ENCODE measurements at regions of chr1 and their contacts with region 1.

Region 1: DNA sequence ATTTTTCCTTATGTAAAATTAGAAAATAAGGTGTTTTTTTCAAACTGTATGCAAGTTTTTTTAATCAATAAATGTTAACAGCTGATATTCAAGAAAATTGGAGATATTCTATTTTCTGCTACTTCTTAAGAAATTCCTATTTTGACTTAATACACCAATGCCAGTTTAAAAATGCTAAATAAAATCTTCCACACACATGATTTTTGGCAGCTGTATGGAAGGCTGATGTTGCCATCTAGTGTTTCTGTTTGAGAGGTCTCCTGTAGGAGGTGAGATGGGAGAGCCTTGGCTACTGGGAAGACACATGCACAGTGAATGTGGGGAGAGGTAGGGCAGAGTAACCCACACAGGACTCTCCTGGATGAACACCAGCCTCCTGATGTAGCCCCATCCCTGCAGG is 29.2 kb upstream of the OR2B11 start:
- DNase-seq: peak in 1 of 2 donors; percentile 76
- ATAC-seq: peak; percentile 54 to 68 (median 64)
- H3K4me3 ChIP-seq: no peak overlapping the region
- H3K4me3 Mint-ChIP-seq: no peak overlapping the region
- H3K27ac ChIP-seq: no peak overlapping the region
- H3K27ac Mint-ChIP-seq: no peak overlapping the region
- H3K4me1 ChIP-seq: no peaks in the 10 kb centered on the region
- H3K4me1 Mint-ChIP-seq: peaks cover 0 to 7% of the 10 kb centered on the region in 2 donors
- H3K27me3 ChIP-seq: no peaks in the 10 kb centered on the region
- H3K27me3 Mint-ChIP-seq: peaks cover 19 to 20% of the 10 kb centered on the region in 2 donors
- CTCF ChIP-seq: peak; percentile 55

Region 2: DNA sequence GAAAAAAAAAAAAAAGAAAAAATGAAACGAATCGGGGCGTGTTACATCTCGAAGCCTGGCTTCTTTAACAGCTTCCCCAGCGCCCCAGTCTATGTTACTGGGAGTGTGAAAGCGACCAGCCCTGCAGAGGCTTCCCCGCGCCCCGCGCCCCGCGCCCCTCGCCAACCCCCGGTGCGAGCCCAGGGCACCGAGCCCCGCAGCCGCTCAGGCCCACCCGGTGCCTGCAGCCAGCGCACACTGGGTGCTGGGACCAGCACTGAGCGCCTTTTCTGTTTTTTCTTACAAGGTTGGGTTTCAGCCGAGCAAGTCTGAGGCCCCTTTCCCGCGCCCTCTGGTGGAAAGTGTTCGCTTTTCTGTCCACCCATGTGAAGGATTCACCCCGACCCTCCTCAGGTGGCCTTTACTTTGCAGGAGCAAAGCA is 113.3 kb before region 1 on chr1:
- intact Hi-C with region 1: loop called (anchors 1 kb)
- DNase-seq: peak; percentile 35 to 76
- ATAC-seq: peak; percentile 75 to 84 (median 79)
- H3K4me3 ChIP-seq: no peak overlapping the region
- H3K4me3 Mint-ChIP-seq: peak overlapping the region; percentile 52
- H3K27ac ChIP-seq: no peak overlapping the region
- H3K27ac Mint-ChIP-seq: no peak overlapping the region
- H3K4me1 ChIP-seq: peaks cover 4% of the 10 kb centered on the region
- H3K4me1 Mint-ChIP-seq: peaks cover 0 to 4% of the 10 kb centered on the region in 2 donors
- H3K27me3 ChIP-seq: no peaks in the 10 kb centered on the region
- H3K27me3 Mint-ChIP-seq: peaks cover 0 to 7% of the 10 kb centered on the region in 2 donors
- CTCF ChIP-seq: peak; percentile 50

Region 3: DNA sequence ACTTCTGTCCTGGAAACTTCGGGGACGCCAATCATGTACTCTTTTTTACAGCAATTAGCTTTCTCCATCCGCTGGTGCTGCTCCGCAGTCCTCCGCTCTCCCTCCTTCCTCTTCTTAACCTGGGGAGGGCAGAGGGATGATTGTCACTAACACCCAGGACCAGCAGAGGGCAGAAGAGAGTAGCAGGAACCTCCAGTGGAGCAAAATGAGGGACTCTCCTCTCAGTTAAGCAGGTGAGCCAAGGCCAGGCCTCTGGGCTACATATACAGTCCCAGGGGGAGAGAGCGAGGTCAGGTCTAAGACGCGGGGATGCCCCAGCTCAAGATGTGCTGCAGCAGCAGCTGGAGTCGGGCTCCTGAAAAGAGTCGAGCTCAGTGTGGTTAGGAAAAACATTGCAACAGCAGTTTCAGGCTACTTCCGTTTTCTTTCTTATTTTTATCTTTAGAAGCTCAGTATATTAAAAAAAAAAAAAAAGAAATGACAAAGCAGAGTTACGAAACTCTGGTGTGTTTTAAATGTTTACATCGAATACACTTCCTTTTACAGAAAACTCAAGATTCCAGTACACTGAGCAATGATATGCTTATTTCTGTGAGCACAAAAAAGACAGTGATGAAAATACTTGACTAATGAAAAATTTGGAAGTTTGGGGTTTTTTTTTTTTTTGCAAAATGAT is 96.8 kb before region 1 on chr1:
- intact Hi-C with region 1: loop called (anchors 1 kb)
- DNase-seq: peak; percentile 70 to 94
- ATAC-seq: peak; percentile 95 to 99 (median 99)
- H3K4me3 ChIP-seq: peak overlapping the region; percentile 17
- H3K4me3 Mint-ChIP-seq: peak overlapping the region; percentile 84
- H3K27ac ChIP-seq: peak overlapping the region; percentile 8
- H3K27ac Mint-ChIP-seq: peak overlapping the region; percentile 74 to 84
- H3K4me1 ChIP-seq: peaks cover 12% of the 10 kb centered on the region
- H3K4me1 Mint-ChIP-seq: peaks cover 7 to 8% of the 10 kb centered on the region in 2 donors
- H3K27me3 ChIP-seq: no peaks in the 10 kb centered on the region
- H3K27me3 Mint-ChIP-seq: no peaks in the 10 kb centered on the region
- CTCF ChIP-seq: peak; percentile 96

Measured in natural killer cell (primary cell).